ENCODE measurements at regions of chr18 and their contacts with region 1.

Region 1: GRCh38 chr18:35005963-35006577 is 35.1 kb upstream of the MAPRE2 start:
- DNase-seq: peak; percentile 70
- ATAC-seq: peak; percentile 88
- H3K4me3 ChIP-seq: no peak overlapping the region
- H3K27ac ChIP-seq: no peak overlapping the region
- H3K4me1 ChIP-seq: no peaks in the 10 kb centered on the region
- H3K27me3 ChIP-seq: no peaks in the 10 kb centered on the region
- CTCF ChIP-seq: peak; percentile 70
- POLR2A ChIP-seq: no peak
- RAD21 ChIP-seq: peak; percentile 90

Region 2: DNA sequence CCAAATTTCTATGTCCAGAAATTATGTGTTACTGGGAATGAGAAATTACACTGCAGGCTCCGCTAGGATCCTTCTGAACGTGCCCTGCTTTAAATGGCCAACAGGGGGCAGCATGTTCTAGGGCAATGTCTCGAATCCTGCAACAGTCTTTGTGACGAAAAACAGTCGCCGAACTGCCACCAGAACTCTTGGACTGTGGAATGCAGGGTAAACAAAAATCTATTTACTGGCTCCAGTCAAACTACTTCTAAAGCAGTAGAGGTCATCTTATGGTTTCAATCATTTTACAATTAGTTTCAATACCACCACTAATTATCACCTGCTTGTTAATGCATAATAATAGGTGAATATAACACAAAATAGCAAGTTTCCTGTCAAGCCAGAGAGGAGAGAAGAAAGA is 225.0 kb after region 1 on chr18:
- CTCF ChIA-PET with region 1: no interaction called
- POLR2A ChIA-PET with region 1: no interaction called
- dilution Hi-C with region 1: no loop called
- in situ Hi-C with region 1: no loop called
- intact Hi-C with region 1: loop called (anchors 5 kb)
- DNase-seq: peak; percentile 63
- ATAC-seq: peak; percentile 96
- H3K4me3 ChIP-seq: no peak overlapping the region
- H3K27ac ChIP-seq: no peak overlapping the region
- H3K4me1 ChIP-seq: peaks cover 2% of the 10 kb centered on the region; the same call in 1 of the 2 replicates
- H3K27me3 ChIP-seq: no peaks in the 10 kb centered on the region
- CTCF ChIP-seq: peak; percentile 92
- POLR2A ChIP-seq: no peak
- RAD21 ChIP-seq: peak; percentile 94

Region 3: DNA sequence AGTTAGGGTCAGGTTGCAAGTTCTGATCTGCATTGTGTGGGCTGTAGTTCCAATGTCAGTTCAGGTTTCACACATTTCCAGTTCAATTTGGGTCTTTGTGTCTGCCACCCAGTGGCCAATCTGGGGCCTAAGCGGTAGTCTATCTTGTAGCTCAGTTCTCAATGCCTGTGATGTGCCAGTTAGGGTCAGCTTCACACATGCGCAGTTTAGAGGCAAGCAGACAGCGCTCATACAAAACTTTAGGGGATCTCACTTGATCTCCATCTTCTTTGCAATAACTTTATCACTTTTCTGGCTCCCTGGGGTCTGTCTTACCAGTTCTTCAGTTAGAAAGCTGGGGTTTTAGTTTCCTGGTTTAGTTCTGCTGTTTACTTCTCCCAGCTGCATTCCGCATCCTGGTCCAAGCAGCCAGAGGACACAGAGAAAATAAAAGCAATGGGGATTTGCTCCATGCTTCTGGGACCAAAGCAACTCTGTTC is 349.1 kb after region 1 on chr18:
- CTCF ChIA-PET with region 1: no interaction called
- POLR2A ChIA-PET with region 1: no interaction called
- dilution Hi-C with region 1: no loop called
- in situ Hi-C with region 1: no loop called
- intact Hi-C with region 1: loop called (anchors 2 kb)
- DNase-seq: peak; percentile 83
- ATAC-seq: peak; percentile 100
- H3K4me3 ChIP-seq: peak overlapping the region; percentile 6; the same call in 1 of the 2 replicates
- H3K27ac ChIP-seq: no peak overlapping the region
- H3K4me1 ChIP-seq: no peaks in the 10 kb centered on the region
- H3K27me3 ChIP-seq: no peaks in the 10 kb centered on the region
- CTCF ChIP-seq: peak; percentile 78
- POLR2A ChIP-seq: no peak
- RAD21 ChIP-seq: peak; percentile 71

Region 4: DNA sequence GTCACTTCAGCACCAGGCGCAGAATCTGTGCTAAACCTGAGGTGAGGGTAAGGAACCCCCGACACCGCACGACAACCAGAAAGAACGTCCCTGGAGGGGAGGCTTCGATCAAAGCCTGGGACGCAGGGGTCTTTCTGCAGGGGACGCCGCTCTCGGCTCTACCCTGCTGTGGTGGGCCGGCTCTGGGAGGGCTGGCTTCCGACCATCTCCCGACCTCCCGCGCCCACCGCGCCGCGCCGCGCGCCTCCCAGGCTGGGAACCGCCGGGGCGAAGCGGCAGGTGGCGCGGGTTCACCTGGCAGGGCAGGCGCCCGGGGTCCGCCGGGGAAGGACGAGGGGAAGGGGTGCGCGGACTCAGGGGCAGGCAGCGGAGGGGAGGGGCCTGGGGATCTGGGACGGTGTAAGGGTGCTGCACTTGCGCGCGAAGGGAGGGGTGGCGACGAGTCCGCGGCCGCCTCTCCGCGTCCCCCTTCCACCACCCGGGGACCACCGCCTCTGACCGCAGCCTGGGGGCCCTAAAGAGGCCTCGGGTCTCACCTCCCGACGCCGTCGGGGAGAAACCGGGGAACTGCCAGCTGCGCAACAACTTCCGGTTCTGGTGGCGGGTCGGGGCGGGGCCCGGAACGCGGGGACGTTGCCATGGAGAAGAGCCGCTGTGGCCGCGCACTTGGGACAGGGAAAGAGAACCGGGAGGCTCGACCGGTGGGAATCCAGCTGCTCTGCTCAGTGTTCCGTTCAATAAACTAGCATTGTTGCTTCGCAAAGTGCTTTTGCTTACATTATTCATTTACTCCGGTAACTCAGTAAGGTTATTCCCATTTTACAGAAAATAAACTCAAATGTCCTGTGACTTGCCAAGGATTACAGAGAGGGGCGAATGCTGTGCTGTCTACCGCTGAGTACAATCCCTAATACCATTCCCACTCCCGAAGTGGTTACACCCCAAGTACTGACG is 370.9 kb after region 1 on chr18 and contains the start of gene ZNF396:
- CTCF ChIA-PET with region 1: no interaction called
- POLR2A ChIA-PET with region 1: no interaction called
- dilution Hi-C with region 1: no loop called
- in situ Hi-C with region 1: no loop called
- intact Hi-C with region 1: no loop called
- DNase-seq: peak; percentile 27
- ATAC-seq: peak; percentile 87
- H3K4me3 ChIP-seq: peak within 1 kb of the TSS; percentile 83
- H3K27ac ChIP-seq: no peak within 1 kb of the TSS; the same call in 1 of the 2 replicates
- H3K4me1 ChIP-seq: no peaks in the 10 kb centered on the region; the same call in 1 of the 2 replicates
- H3K27me3 ChIP-seq: peaks cover 5% of the 10 kb centered on the region; the same call in 1 of the 2 replicates
- CTCF ChIP-seq: no peak
- POLR2A ChIP-seq: no peak
- RAD21 ChIP-seq: no peak
- total RNA-seq, gene ZNF396: 0.54 and 0.56 TPM in 2 replicates